ENCODE measurements at regions of chr5 and their contacts with region 1.

Region 1: DNA sequence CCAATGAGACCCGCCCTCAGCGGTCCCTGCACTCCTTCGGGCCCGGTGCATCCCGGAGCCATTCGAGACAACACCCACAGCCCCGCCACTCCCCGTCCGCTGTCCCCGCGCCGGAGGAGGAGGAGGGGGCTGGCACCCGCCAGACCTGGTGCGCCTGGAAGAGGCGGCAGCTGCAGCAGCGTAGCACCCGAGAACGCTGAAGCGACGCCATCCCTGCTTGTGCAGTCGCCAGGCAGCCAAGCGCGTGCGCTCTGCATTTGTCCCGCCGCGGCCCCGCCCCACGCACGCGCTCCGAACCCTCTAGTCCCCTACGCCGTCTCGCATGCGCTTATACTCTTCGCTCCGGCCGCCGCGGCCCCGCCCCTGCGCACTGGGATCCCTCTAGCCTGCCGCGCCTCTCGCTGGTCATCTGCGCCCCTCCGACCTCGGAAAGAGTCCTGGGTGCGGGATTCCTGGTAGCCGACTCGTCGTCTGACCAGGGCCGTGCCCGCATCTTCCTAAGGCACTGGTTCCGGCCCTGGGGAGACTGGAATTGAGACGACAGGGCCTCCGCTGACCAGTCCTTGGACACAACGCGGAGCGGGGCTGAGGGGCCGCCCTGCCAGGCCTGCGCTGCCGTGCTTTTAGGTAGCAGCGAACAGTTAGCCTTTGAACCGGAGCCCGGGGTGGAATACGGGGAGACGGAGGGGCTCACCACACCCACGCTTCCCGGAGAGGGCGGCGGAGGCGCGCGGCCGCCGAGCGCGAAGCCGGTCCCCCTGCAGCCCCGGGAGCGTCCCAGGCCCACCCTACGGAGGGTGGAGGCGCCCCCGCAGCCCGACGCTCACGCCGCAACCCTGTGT is at the start of gene MRNIP:
- DNase-seq: peak; percentile 95 to 98 (median 97)
- H3K4me3 ChIP-seq: peak within 1 kb of the TSS; percentile 55 to 94 (median 76)
- H3K27ac ChIP-seq: peak within 1 kb of the TSS; percentile 39 to 93 (median 84)
- H3K4me1 ChIP-seq: peaks cover 6 to 10% of the 10 kb centered on the region in 2 donors
- H3K27me3 ChIP-seq: no peaks in the 10 kb centered on the region
- CTCF ChIP-seq: peak in 1 of 6 experiments; percentile 18
- POLR2A ChIP-seq: peak; percentile 52 to 81
- total RNA-seq, gene MRNIP: 14.7 to 46.5 (median 31.1) TPM

Region 2: GRCh38 chr5:179806250-179807222 is 52.3 kb before region 1 on chr5 and contains the start of gene MGAT4B:
- intact Hi-C with region 1: loop called in 1 of 2 experiments (anchors 10 kb)
- DNase-seq: peak; percentile 75 to 85 (median 78)
- H3K4me3 ChIP-seq: peak within 1 kb of the TSS; percentile 24 to 84 (median 68)
- H3K27ac ChIP-seq: peak within 1 kb of the TSS; percentile 14 to 93 (median 88)
- H3K4me1 ChIP-seq: peaks cover 37 to 48% of the 10 kb centered on the region in 2 donors
- H3K27me3 ChIP-seq: no peaks in the 10 kb centered on the region
- CTCF ChIP-seq: peak in 1 of 6 experiments; percentile 5
- POLR2A ChIP-seq: peak; percentile 72 to 75
- total RNA-seq, gene MGAT4B: 88.6 to 242 (median 215) TPM